Posterior vena cava (tissue), 2 donors: ENCODE measurements at regions of chr6 and their contacts with region 1.

Region 1: GRCh38 chr6:53059648-53060589 is 5.3 kb upstream of the FBXO9 start:
- DNase-seq: no peak

Region 2: DNA sequence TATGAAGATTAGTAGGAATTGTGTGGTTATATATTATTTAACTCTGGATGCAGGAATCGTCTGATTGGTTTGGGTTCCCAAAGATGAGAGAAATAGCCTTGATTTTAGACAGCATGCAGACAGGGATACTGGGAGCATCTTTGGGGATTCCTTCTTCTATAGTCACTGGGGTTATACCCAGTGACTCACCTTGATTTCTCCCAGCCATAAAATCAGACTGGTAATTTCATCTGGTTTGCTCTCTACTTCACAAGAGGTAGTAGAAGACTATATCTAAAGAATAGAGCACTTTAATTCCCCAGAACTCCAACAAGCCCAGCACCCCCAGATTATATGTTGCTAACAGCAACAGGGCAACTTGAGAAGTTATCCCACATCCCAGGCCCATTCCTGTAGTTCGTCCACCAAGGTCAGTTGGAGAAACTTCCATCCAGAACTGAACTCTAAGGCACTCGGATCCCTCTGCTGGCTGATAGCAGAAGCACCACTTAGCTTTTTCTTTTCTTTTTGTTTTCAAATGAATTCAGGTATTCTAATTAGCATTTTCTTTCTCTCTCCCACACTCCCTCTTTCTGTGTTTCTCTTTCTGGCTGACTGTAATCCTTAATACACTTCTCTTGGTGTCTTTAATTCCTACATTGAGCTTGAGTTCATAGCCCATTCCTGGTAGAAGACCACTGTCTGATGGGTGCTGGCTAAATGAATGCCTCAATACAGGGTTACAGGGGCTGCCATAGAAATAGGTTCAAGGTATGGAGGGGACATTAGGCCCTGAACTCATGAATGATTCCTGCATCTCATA is 660.2 kb before region 1 on chr6:
- intact Hi-C with region 1: no loop called
- DNase-seq: no peak

Region 3: DNA sequence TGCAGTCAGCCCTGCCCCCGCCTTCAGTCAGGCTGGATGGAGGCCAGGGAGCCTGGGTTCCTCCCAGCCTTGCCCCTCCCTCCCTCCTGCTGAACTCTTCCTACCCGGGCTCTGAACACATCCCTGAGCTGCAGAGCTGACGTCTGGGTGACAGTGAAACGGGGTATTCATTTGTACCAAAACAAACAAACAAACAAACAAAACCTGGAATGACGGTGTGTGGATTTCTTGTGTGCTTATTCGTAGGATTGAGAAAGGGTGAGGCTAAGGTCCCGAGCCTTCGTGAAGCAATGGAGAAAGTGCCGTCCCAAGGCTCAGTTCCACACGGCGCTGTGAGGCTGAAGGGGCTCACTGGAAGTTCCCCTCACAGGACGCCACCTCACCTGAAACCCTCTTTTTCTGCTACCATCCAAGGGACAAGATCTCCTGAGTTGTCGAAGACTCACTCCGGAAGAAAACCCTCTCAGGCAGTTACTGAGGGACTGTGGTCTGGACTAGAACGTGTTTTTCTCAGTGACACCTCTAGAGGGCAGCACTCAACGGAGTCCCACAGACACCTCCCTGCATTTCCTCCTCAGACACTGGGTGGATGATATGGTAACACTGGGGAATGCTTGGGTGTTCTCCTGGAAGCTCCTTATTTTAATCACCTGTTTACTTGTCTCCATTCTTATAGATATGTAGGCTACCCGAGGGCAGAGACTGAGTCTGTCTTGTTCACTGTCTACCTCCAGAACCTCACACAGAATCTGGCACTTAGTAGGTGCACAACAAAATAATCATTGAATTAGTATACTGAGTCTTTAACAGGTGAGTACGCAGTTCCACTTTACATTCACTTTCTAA is 177.7 kb before region 1 on chr6:
- intact Hi-C with region 1: loop called in 1 of 2 experiments (anchors 10 kb)
- DNase-seq: no peak

Region 4: GRCh38 chr6:52995913-52996645 is 63.8 kb before region 1 on chr6:
- intact Hi-C with region 1: loop called in 1 of 2 experiments (anchors 1 kb)
- DNase-seq: no peak

Region 5: DNA sequence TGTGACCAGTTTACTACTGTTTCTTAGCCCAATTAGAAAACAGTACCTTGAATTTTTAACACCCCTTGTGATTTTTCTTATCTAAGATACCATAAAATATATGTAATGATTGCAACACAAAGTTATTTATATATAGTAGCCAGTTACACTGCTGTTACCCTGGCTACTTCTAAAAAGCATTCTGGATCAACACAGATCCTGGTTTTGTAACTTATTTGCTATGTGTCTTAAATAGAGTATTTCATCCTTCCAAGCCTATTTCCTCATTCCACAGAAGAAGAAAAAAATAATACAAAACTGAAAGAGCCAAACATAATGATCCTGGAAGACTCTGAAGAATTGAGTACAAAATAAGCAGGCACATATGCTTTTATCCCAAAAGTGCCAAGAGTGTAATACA is 45.9 kb before region 1 on chr6:
- intact Hi-C with region 1: no loop called
- DNase-seq: no peak